Posterior cingulate gyrus (tissue), 11 donors: ENCODE measurements at regions of chr1 and their contacts with region 1.

Region 1: DNA sequence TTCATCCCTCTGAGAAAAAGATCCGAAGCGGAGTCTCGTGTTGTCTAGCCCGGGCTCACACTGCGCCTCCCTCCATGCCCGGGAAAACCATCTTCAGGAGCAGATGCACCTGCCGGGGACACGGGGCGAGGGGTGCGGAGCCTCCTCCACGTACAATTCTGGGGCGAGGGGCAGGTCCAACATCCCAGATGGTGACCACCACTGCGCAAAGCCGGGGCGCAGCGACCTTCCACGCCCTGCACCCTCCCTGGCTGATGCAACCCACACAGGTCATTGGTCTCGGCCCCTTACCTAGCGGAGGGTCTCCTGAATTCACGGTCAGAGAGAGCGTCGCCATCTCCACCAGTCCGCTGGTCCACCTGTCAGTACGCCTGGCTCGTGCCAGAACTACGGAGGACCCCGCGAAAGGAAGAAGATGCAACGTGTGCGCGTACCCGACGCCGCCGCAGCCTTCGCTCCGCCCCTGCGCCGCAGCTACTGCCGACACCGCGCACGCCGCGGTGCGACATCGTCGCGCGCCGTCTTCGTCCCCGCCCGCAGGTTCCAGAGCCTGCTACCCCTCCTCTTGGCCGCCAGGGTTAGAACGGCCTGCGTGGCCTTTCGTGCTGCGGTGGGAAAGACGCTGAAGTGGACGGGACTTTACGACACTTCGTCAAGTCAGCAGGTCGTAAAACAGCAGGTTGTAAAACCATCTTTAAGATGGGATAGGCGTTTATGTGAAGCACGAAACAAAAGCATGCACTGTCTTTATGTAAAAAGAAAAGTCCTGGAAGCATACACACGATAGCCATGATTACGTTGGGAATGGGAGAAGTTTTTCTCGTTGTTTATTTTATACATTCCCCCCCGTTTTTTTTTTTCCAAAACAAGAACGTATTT is at the start of gene EPRS1:
- DNase-seq: peak; percentile 83 to 99 (median 92)

Region 2: DNA sequence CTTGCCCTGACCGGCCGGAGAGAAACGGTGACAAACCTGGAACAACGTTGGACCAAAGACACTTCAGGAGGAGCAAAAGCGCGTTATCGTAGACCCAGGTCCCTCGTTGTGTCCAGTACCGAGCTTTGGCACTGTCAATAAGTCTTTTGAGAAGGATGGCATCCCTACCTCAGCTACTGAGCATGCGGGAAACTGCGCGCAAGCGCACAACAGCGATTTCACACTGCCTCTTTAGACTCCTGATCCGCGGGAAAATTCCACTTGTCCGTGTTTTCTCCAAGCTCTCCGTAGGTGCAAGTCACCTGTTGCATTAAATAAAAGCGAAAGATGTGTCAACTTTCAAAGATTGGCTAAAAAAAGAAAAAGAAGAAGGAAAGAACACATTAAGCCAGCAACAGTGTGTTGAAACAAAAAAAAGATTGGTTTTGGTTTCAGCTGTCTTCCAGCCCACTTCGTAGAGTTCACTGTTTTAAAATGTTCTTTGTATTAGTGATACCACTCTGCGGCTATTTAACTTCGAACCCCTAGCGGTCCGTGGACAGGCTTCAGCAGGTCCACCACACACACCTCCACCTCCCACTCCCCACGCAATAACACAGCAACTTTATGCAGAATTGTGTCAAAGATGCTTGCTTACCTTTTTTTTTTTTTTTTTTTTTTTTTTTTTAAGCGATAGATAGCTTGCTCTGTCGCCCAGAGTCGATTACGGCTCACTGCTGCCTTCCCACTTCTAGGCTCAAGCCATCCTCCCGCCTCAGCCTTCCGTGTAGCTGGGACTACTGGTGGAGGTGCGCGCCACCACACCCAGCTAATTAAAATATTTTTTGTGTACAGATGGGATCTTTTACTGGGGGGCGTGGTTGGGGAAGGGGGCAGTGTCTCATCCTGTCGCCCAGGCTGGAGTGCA is 43.6 kb after region 1 on chr1 and contains the start of gene BPNT1:
- intact Hi-C with region 1: loop called (anchors 2 kb)
- DNase-seq: peak; percentile 85 to 98 (median 92)